ENCODE measurements at regions of chr10 and their contacts with region 1.

Region 1: DNA sequence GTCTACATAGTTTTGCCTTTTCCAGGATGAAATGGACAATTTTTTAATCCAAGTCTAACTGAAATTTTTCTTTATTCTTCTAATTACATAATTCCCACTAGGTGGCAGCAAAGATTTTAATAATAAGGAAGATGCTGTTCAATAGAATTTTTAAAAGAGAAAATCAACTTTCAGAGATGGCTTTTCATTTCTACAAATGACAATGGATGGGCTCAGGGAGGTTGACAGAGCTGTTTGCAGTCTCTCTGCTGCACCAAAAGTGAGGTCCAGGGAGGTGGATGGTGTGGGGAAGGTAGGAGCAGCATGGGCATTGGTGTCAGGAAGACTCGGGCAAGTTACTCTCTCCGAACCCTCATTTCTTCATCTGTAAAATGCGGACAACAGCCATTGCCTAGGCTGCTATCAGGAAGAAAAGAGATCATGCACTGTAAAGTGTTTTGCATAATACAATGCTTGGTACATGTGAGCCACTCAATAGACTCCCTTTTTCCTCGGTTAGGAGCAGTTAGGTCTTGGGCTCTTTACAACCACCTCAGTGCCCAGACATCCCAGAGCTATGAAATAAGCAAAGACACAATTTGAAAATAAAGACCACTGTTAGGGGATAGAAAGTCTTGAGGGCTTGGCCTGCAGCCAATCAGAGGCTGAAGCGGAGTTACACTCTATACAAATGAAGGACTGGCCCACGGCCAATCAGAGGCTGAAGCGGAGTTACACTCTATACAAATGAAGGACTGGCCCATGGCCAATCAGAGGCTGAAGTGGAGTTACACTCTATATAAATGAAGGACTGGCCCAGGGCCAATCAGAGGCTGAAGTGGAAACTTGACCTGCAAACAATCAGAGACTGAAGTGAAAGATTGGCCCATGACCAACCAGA is 107.1 kb downstream of the ABLIM1 start:
- DNase-seq: peak; percentile 50

Region 2: DNA sequence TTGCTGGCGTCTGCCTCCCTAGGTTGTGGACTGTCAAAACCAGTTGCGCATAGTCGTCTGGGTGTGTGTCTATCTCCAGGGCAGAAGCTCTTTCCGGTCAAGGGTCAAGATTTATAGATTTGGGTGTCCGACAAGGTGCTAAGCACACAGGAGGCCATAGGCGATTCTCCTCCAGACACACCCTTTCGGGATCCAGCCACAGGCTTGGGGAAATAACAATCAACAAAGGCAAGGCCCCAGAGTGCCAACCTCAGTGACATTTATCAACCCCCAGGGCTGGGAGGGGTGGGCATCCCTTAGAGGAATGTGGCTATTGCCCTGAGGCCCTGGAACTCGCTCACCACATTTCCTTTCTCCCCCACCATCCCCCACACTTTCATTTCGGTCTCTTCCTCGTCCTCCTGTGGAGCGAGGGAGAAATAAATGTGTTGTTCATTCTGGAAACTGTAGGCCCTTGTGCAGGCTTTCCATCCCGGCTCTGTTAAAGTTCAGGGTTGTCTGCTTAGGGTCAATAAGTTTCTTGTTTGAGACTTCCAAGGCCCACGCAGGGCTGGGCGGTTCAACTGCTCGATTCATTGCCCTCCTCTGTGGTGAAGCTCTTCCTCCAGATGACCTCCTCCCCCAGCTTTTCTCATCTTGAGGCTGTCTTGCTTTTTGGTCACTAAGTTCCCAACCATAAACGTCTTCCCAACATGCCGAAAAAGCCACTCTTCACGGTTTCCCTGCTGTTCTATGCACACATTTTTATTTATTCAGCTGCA is 204.5 kb before region 1 on chr10:
- in situ Hi-C with region 1: no loop called
- DNase-seq: peak; percentile 93

Region 3: GRCh38 chr10:114694752-114695151 is 143.8 kb after region 1 on chr10:
- in situ Hi-C with region 1: loop called (anchors 25 kb)
- DNase-seq: peak; percentile 75

Region 4: DNA sequence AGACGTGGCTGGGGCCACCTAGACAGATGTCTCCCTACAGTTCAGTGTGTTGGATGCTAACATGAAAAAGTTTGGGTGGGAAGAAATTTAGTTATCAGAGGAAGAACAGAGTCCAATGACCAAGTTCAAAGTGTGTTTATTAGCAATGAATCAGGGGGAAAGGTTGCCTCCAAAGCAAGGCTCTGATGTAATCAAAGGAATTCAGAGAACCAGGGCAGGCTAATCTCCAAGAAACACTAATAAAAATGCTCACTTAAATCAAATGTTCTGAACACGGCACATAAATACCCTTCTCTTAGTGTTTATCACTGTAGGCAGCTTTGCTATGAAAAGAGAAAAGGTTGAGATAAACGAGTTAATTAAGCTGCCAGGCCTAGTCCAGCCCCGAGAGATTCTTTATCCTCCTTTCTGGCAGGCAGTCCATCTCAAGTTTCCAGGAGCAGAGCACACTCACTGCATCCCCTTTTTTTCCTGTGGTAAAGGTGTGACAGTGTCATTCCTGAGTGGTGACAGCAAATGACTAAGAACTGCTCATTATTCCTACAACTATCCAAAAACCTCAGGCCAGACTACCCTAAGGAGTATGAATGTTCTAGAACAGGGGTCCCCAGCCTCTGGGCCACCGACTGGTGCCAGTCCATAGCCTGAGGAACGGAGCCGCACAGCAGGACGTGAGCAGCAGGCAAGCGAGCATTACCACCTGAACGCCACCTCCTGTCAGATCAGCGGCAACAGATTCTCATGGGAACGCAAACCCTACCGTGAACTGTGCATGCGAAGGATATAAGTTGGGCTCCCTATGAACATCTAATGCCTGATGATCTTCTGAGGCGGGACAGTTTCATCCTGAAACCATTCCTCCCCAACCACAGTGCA is 203.7 kb after region 1 on chr10:
- in situ Hi-C with region 1: no loop called
- DNase-seq: no peak

Region 5: GRCh38 chr10:115001506-115002381 is 450.7 kb after region 1 on chr10:
- in situ Hi-C with region 1: no loop called
- DNase-seq: no peak